ENCODE measurements at regions of chr2 and their contacts with region 1.

Region 1: DNA sequence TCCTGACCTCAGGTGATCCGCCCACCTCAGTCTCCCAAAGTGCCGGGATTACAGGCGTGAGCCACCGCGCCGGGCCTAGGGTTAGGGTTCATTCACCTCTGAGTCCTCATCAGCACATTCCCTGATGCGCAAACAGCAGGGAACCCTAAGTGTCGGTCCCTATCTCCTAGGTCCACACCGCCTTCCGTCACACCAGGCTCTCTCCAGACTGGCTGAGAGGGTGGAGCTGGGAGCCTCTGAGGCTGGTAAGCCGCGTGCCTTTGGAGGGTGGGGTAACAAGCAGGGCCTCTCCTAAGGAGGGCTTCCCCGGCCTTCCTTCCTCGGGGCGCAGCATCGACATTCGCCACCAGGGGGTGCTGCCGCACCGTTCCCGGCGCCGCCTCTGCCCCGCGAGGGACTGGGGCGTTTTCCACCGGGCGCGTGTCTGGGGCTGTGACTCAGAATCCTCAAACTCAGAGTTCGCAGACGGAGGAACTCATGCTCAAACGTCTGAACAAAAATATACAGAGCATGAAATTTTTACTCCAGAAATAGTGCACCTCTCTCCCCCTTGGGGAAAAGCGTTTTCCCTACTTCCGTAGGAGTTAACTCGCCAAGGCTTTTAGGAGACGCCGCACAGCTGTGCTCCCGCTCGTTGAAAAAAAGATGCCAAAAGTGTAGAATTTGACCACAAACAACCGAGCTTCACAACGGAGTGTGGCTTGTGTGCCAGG is 63.9 kb upstream of the ASAP2 start:
- DNase-seq: peak; percentile 87 to 89
- ATAC-seq: peak; percentile 84

Region 2: GRCh38 chr2:8872821-8873432 is 269.8 kb before region 1 on chr2:
- intact Hi-C with region 1: loop called in 1 of 2 experiments (anchors 5 kb)
- DNase-seq: no peak
- ATAC-seq: peak; percentile 78

Region 3: GRCh38 chr2:9076210-9076609 is 66.5 kb before region 1 on chr2:
- intact Hi-C with region 1: no loop called
- DNase-seq: no peak
- ATAC-seq: no peak

Region 4: GRCh38 chr2:9205963-9206948 is 63.5 kb after region 1 on chr2 and contains the start of gene ASAP2:
- intact Hi-C with region 1: loop called in 1 of 2 experiments (anchors 10 kb)
- DNase-seq: peak; percentile 62 to 81
- ATAC-seq: peak; percentile 62
- total RNA-seq, gene ASAP2: 63.8 to 71.0 TPM

Region 5: GRCh38 chr2:9333591-9334171 is 191.0 kb after region 1 on chr2:
- intact Hi-C with region 1: loop called in 1 of 2 experiments (anchors 2 kb)
- DNase-seq: peak; percentile 60 to 80
- ATAC-seq: peak; percentile 50